HepG2 (cell line): ENCODE measurements at regions of chr3 and their contacts with region 1.

Region 1: DNA sequence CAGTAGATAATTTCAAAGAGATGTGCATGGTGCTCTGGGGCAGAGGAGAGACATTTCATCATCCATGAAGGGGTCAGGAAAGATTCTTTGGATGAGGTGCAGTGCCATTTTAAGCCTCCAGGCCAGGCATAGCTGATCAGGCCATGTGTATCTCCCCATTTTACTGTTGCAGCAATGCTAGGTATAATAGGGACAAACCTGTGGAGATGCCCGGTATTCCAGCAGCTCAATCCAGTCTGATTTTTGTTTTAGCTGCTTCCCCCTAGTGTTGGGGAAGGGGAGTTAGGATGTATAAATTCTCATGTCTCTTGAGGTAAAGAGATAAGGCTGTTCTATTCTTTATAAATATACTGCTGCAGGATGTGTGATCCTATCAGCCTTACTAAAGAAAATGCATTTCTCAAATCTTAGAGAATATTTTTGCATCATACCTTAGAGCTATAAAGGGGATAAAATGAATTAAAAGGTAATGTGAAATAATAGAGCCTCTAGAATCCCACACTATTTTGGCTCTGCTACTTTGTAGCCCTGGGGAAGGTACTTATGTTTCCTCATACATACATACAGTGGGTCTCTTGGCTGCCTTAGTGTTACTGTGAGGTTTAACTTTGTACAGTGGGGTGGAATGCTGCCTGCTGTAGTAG is 5.2 kb downstream of the CDV3 start:
- DNase-seq: peak; percentile 81
- ATAC-seq: peak; percentile 83
- H3K4me3 ChIP-seq: no peak overlapping the region
- H3K27ac ChIP-seq: peak overlapping the region; percentile 6
- H3K4me1 ChIP-seq: peaks cover 47% of the 10 kb centered on the region
- H3K27me3 ChIP-seq: no peaks in the 10 kb centered on the region
- CTCF ChIP-seq: peak; percentile 63
- EP300 ChIP-seq: no peak
- POLR2A ChIP-seq: no peak
- RAD21 ChIP-seq: peak; percentile 70; the same call in 1 of the 2 replicates

Region 2: GRCh38 chr3:132360717-132361116 is 1218.0 kb before region 1 on chr3:
- CTCF ChIA-PET with region 1: no interaction called
- POLR2A ChIA-PET with region 1: no interaction called
- in situ Hi-C with region 1: no loop called
- intact Hi-C with region 1: no loop called
- DNase-seq: no peak
- ATAC-seq: peak; percentile 35; the same call in 2 of the 3 replicates
- H3K4me3 ChIP-seq: no peak overlapping the region
- H3K27ac ChIP-seq: no peak overlapping the region
- H3K4me1 ChIP-seq: no peaks in the 10 kb centered on the region
- H3K27me3 ChIP-seq: no peaks in the 10 kb centered on the region; a peak in 1 of 5 replicates
- CTCF ChIP-seq: no peak
- EP300 ChIP-seq: no peak
- POLR2A ChIP-seq: no peak
- RAD21 ChIP-seq: no peak

Region 3: GRCh38 chr3:133443649-133444422 is 134.8 kb before region 1 on chr3:
- CTCF ChIA-PET with region 1: no interaction called
- POLR2A ChIA-PET with region 1: no interaction called
- in situ Hi-C with region 1: no loop called
- intact Hi-C with region 1: loop called (anchors 5 kb)
- DNase-seq: peak; percentile 44
- ATAC-seq: no peak
- H3K4me3 ChIP-seq: no peak overlapping the region
- H3K27ac ChIP-seq: no peak overlapping the region
- H3K4me1 ChIP-seq: peaks cover 31% of the 10 kb centered on the region
- H3K27me3 ChIP-seq: no peaks in the 10 kb centered on the region
- CTCF ChIP-seq: no peak
- EP300 ChIP-seq: 0 out of 4 replicates have a peak, but pooled peaks of 1 of the 2 experiments have one; percentile 33
- POLR2A ChIP-seq: no peak
- RAD21 ChIP-seq: no peak

Region 4: DNA sequence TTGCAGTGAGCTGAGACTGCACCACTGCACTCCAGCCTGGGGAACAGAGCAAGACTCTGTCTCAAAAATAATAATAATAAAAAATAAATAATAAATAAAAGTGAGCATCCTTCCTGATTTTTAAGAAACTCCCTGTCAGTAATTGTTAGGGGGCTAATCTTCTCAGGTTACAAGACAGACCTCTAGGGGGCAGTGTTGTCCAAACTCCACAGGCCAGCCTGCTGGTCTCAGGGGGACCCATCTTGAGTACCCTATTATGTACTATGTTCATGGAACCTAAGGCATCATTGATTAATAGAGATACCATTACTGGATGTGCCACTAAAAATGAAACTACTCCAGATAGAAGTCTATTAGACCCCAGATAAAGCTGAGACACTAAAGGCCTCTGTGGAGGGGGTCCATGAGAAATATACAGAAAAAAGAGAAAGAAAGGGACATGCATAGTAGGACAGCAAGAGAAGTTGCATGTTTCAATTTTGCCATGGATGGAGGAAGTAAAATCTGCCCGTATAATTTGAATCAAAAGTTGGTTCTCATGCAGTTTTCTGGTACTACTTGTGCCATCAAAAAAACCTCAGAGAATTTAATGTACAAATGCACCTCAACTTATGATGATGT is 90.6 kb before region 1 on chr3:
- CTCF ChIA-PET with region 1: interaction called, 17 read pairs
- POLR2A ChIA-PET with region 1: interaction called, 22 read pairs
- in situ Hi-C with region 1: loop called (anchors 5 kb)
- intact Hi-C with region 1: no loop called
- DNase-seq: peak; percentile 20
- ATAC-seq: no peak
- H3K4me3 ChIP-seq: no peak overlapping the region
- H3K27ac ChIP-seq: no peak overlapping the region
- H3K4me1 ChIP-seq: peaks cover 9% of the 10 kb centered on the region
- H3K27me3 ChIP-seq: no peaks in the 10 kb centered on the region
- CTCF ChIP-seq: peak; percentile 46
- EP300 ChIP-seq: no peak
- POLR2A ChIP-seq: no peak
- RAD21 ChIP-seq: no peak

Region 5: DNA sequence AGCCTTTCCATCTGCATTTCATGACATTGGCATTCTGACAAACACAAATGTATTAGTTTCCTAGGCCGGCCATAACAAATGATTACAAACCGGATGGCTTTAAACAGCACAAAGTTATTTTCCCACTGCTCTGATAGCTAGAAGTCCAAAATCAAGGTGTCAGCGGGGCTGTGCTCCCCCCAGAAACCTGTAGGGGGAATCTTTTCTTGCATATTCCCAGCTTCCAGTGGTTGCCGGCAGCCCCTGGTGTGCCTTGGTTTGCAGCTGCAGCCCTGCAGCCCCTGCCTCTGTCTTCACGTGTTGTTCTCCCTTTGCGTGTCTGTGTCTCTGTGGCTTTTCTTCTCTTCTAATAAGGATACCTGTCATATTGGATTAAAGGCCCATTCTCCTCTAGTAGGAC is 84.2 kb before region 1 on chr3:
- CTCF ChIA-PET with region 1: interaction called, 17 read pairs
- POLR2A ChIA-PET with region 1: interaction called, 22 read pairs
- in situ Hi-C with region 1: loop called (anchors 5 kb)
- intact Hi-C with region 1: loop called (anchors 1 kb)
- DNase-seq: peak; percentile 65
- ATAC-seq: peak; percentile 89
- H3K4me3 ChIP-seq: no peak overlapping the region
- H3K27ac ChIP-seq: no peak overlapping the region
- H3K4me1 ChIP-seq: peaks cover 17% of the 10 kb centered on the region
- H3K27me3 ChIP-seq: no peaks in the 10 kb centered on the region
- CTCF ChIP-seq: peak; percentile 70
- EP300 ChIP-seq: no peak
- POLR2A ChIP-seq: no peak
- RAD21 ChIP-seq: peak; percentile 83

Region 6: GRCh38 chr3:134956395-134956794 is 1377.7 kb after region 1 on chr3:
- CTCF ChIA-PET with region 1: no interaction called
- POLR2A ChIA-PET with region 1: no interaction called
- in situ Hi-C with region 1: no loop called
- intact Hi-C with region 1: no loop called
- DNase-seq: no peak
- ATAC-seq: no peak
- H3K4me3 ChIP-seq: no peak overlapping the region
- H3K27ac ChIP-seq: no peak overlapping the region
- H3K4me1 ChIP-seq: no peaks in the 10 kb centered on the region
- H3K27me3 ChIP-seq: no peaks in the 10 kb centered on the region; a peak in 1 of 5 replicates
- CTCF ChIP-seq: no peak
- EP300 ChIP-seq: no peak
- POLR2A ChIP-seq: no peak
- RAD21 ChIP-seq: no peak